HEK293 (cell line): ENCODE measurements at regions of chr19 and their contacts with region 1.

Region 1: GRCh38 chr19:6372594-6373095 is at the start of gene ALKBH7:
- H3K4me3 ChIP-seq: peak within 1 kb of the TSS; percentile 88
- H3K27ac ChIP-seq: peak within 1 kb of the TSS; percentile 88
- H3K4me1 ChIP-seq: peaks cover 3% of the 10 kb centered on the region; the same call in 1 of the 2 replicates
- CTCF ChIP-seq: no peak

Region 2: GRCh38 chr19:6340493-6341201 is 32.0 kb before region 1 on chr19:
- CTCF ChIA-PET with region 1: no interaction called
- POLR2A ChIA-PET with region 1: interaction called, 10 read pairs
- H3K4me3 ChIP-seq: no peak overlapping the region
- H3K27ac ChIP-seq: no peak overlapping the region
- H3K4me1 ChIP-seq: no peaks in the 10 kb centered on the region
- CTCF ChIP-seq: no peak

Region 3: DNA sequence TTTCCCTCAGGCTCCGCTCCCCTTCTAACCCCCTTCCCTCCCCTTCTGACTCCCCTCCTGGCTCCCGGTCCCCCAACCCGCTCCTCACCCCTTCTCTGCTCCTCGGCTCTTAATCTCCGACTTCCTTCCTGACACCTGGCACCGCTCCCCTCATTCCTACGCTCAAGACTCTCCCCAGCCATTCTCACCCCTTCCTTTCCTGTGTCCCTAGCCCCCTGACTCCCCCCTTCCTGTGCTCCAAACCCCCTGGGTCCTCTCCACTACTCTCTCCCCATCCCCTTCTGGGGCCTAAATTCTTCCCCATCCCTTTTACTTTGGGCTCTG is 10.7 kb before region 1 on chr19:
- CTCF ChIA-PET with region 1: interaction called, 3 read pairs
- POLR2A ChIA-PET with region 1: interaction called, 60 read pairs
- H3K4me3 ChIP-seq: peak overlapping the region; percentile 82
- H3K27ac ChIP-seq: peak overlapping the region; percentile 67; the same call in 1 of the 2 replicates
- H3K4me1 ChIP-seq: no peaks in the 10 kb centered on the region
- CTCF ChIP-seq: no peak

Region 4: GRCh38 chr19:6424939-6425731 is 52.5 kb after region 1 on chr19:
- CTCF ChIA-PET with region 1: no interaction called
- POLR2A ChIA-PET with region 1: interaction called, 25 read pairs
- H3K4me3 ChIP-seq: no peak overlapping the region
- H3K27ac ChIP-seq: peak overlapping the region; percentile 50
- H3K4me1 ChIP-seq: peaks cover 7% of the 10 kb centered on the region
- CTCF ChIP-seq: no peak